ENCODE measurements at regions of chr21 and their contacts with region 1.

Region 1: DNA sequence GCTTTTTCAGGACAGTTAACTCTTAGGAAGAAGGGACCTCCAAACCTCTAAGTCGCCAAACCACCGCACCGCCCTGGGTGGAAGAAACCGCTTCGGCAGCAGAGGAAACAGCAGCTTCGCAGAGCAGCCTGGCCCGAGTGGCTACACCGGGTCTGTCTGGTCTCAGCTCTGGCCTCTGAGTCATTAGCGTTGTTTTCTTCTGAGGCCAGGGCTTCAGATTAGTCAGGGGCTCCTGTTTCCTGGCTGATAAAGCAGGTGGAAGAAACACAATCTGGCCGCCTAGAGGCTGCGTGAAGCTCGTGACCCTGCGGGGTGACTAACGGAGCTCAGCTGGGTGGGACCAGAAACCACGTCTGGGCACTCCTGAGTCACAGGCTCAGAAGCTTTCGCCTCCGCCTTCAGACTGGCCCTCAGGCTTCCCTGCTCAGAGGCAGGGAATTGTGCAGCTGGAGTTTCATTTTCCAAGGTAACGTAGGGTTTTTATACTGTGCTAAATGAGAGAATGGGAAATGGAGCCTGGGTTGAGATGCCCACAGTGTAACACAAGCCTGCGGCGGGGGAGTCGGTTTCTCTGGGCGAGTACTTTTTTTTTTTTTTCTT is 44.9 kb downstream of the CHAF1B start:
- DNase-seq: peak in 1 of 2 experiments; percentile 54
- H3K4me3 ChIP-seq: no peak overlapping the region
- H3K27ac ChIP-seq: no peak overlapping the region
- H3K4me1 ChIP-seq: no peaks in the 10 kb centered on the region; a peak in 3 of 7 replicates
- H3K27me3 ChIP-seq: no peaks in the 10 kb centered on the region
- CTCF ChIP-seq: peak in 1 of 3 experiments; percentile 6; a peak in 1 of 4 replicates
- EP300 ChIP-seq: no peak
- POLR2A ChIP-seq: no peak
- RAD21 ChIP-seq: 0 out of 4 replicates have a peak, but pooled peaks of 1 of the 2 experiments have one; percentile 1

Region 2: DNA sequence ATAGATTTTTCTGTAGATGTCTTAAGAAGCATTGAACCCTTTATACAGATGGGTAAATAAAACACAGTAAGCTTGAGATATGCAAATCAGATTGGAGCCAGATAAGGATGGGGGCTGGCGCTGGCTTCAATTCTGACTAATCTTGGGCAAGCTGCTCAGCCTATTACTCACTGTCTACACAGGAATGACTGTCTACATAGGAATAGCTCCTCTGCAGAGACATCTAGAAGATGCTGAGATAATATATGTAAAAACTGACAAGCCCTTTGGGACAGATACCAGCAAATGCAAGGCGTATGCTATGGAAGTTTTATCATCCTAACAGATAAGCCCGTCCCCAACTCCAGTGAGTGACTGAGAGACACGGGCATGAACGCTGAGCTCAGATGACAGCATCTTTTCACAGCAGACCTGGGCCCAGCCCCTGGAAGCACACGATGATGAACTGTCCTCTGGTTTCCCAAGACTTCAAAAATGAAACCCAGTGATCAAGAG is 48.2 kb after region 1 on chr21:
- CTCF ChIA-PET with region 1: interaction called, 19 read pairs
- POLR2A ChIA-PET with region 1: no interaction called
- DNase-seq: no peak
- H3K4me3 ChIP-seq: no peak overlapping the region
- H3K27ac ChIP-seq: no peak overlapping the region
- H3K4me1 ChIP-seq: no peaks in the 10 kb centered on the region
- H3K27me3 ChIP-seq: no peaks in the 10 kb centered on the region
- CTCF ChIP-seq: no peak
- EP300 ChIP-seq: no peak
- POLR2A ChIP-seq: no peak
- RAD21 ChIP-seq: no peak